ENCODE measurements at regions of chr1 and their contacts with region 1.

Region 1: GRCh38 chr1:180287988-180288705 is 58.1 kb downstream of the LHX4 start:
- DNase-seq: peak in 2 of 4 experiments; percentile 46 to 59
- ATAC-seq: peak; percentile 59
- H3K4me3 ChIP-seq: no peak overlapping the region
- H3K27ac ChIP-seq: peak overlapping the region; percentile 2; the same call in 2 of the 3 replicates
- H3K4me1 ChIP-seq: peaks cover 7 to 27% of the 10 kb centered on the region in 2 experiments; a peak in 4 of 5 replicates
- H3K27me3 ChIP-seq: no peaks in the 10 kb centered on the region
- CTCF ChIP-seq: no peak
- EP300 ChIP-seq: no peak
- POLR2A ChIP-seq: no peak
- RAD21 ChIP-seq: no peak

Region 2: DNA sequence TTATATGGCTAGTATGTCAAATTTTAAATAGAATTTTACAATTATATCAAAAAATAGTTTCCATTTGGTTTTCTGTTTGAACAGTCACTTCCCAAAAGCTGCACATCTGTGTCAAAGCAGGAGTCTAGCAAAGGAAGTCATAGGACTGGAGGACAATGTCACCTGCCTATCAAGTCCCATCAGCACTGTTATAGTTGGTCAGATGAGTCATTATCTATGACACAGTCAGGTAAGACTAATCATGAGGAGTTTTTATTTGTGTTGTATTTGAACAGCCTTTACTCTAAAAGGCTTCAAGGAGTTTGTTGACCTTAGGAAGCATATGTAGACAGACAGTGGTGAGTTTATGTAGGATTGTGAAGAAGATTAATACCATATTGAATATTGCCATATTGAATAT is 207.7 kb before region 1 on chr1:
- CTCF ChIA-PET with region 1: no interaction called
- POLR2A ChIA-PET with region 1: no interaction called
- in situ Hi-C with region 1: no loop called
- intact Hi-C with region 1: no loop called
- DNase-seq: peak in 2 of 4 experiments; percentile 43 to 47
- ATAC-seq: peak; percentile 43; the same call in 1 of the 3 replicates
- H3K4me3 ChIP-seq: no peak overlapping the region
- H3K27ac ChIP-seq: no peak overlapping the region
- H3K4me1 ChIP-seq: no peaks in the 10 kb centered on the region
- H3K27me3 ChIP-seq: no peaks in the 10 kb centered on the region
- CTCF ChIP-seq: no peak
- EP300 ChIP-seq: no peak
- POLR2A ChIP-seq: no peak
- RAD21 ChIP-seq: no peak

Region 3: GRCh38 chr1:180213401-180214170 is 74.6 kb before region 1 on chr1:
- CTCF ChIA-PET with region 1: no interaction called
- POLR2A ChIA-PET with region 1: no interaction called
- in situ Hi-C with region 1: no loop called
- intact Hi-C with region 1: no loop called
- DNase-seq: peak; percentile 90 to 100 (median 100)
- ATAC-seq: peak; percentile 83
- H3K4me3 ChIP-seq: no peak overlapping the region
- H3K27ac ChIP-seq: no peak overlapping the region
- H3K4me1 ChIP-seq: peaks cover 0 to 8% of the 10 kb centered on the region in 2 experiments; a peak in 2 of 5 replicates
- H3K27me3 ChIP-seq: no peaks in the 10 kb centered on the region
- CTCF ChIP-seq: peak; percentile 31 to 68 (median 60)
- EP300 ChIP-seq: no peak
- POLR2A ChIP-seq: no peak
- RAD21 ChIP-seq: peak; percentile 39 to 63; a peak in 3 of 4 replicates

Region 4: DNA sequence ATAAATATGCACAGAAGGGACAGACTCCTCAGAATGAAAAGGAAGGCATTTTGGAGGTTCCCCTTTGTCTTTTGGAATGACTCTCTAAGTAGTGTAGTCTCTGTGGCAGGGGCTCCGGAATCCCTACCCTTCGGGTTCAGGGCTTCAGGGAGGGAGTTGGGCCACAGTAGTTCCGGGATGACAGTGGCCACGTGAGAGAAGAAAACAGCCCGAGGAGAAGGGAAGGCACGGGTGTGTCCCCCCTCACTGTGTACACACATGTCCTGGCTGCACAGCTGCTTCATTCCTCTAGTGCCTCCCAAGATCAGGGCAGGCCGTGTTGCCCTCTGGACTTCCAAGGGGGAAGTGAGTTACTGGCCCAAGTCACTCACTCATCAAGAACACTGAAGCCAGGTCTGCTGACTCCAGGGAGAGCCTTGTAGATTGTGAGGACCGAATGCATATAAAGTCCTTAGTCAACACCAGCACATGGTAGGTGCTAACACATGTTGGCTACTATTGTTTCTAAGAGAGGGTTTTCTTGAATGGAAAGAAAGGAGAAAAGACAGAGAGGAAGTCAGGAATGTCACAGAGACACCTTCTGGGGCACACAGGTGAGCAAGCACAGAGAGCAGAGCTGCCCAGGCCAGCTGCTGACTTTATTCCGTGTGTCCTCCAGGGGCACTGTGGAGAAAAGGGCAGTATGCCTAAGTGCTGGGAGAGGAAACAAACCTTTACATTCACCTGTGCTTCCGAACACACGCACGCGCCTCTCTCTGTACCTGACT is 18.2 kb before region 1 on chr1:
- CTCF ChIA-PET with region 1: no interaction called
- POLR2A ChIA-PET with region 1: interaction called, 17 read pairs
- in situ Hi-C with region 1: no loop called
- intact Hi-C with region 1: no loop called
- DNase-seq: no peak
- ATAC-seq: peak; percentile 70
- H3K4me3 ChIP-seq: no peak overlapping the region
- H3K27ac ChIP-seq: no peak overlapping the region
- H3K4me1 ChIP-seq: peaks cover 16 to 21% of the 10 kb centered on the region in 2 experiments
- H3K27me3 ChIP-seq: peaks cover 5 to 14% of the 10 kb centered on the region in 2 experiments; a peak in 3 of 5 replicates
- CTCF ChIP-seq: peak; percentile 44 to 47 (median 46); a peak in 5 of 6 replicates
- EP300 ChIP-seq: no peak
- POLR2A ChIP-seq: no peak
- RAD21 ChIP-seq: no peak

Region 5: GRCh38 chr1:180458807-180459206 is 170.7 kb after region 1 on chr1:
- CTCF ChIA-PET with region 1: no interaction called
- POLR2A ChIA-PET with region 1: no interaction called
- in situ Hi-C with region 1: no loop called
- intact Hi-C with region 1: no loop called
- DNase-seq: no peak
- ATAC-seq: no peak
- H3K4me3 ChIP-seq: no peak overlapping the region
- H3K27ac ChIP-seq: no peak overlapping the region
- H3K4me1 ChIP-seq: no peaks in the 10 kb centered on the region; a peak in 1 of 5 replicates
- H3K27me3 ChIP-seq: no peaks in the 10 kb centered on the region
- CTCF ChIP-seq: no peak
- EP300 ChIP-seq: no peak
- POLR2A ChIP-seq: no peak
- RAD21 ChIP-seq: no peak